Activated CD4-positive, alpha-beta memory T cell treated with anti-CD3 and anti-CD28 coated beads for 36 hours (primary cell): ENCODE measurements at regions of chr7 and their contacts with region 1.

Region 1: GRCh38 chr7:155298834-155299534 is 1.3 kb downstream of the INSIG1 start:
- DNase-seq: peak; percentile 98
- H3K4me3 Mint-ChIP-seq: peak overlapping the region; percentile 93
- H3K27ac Mint-ChIP-seq: peak overlapping the region; percentile 96
- H3K4me1 Mint-ChIP-seq: peaks cover 38% of the 10 kb centered on the region
- H3K27me3 Mint-ChIP-seq: no peaks in the 10 kb centered on the region

Region 2: DNA sequence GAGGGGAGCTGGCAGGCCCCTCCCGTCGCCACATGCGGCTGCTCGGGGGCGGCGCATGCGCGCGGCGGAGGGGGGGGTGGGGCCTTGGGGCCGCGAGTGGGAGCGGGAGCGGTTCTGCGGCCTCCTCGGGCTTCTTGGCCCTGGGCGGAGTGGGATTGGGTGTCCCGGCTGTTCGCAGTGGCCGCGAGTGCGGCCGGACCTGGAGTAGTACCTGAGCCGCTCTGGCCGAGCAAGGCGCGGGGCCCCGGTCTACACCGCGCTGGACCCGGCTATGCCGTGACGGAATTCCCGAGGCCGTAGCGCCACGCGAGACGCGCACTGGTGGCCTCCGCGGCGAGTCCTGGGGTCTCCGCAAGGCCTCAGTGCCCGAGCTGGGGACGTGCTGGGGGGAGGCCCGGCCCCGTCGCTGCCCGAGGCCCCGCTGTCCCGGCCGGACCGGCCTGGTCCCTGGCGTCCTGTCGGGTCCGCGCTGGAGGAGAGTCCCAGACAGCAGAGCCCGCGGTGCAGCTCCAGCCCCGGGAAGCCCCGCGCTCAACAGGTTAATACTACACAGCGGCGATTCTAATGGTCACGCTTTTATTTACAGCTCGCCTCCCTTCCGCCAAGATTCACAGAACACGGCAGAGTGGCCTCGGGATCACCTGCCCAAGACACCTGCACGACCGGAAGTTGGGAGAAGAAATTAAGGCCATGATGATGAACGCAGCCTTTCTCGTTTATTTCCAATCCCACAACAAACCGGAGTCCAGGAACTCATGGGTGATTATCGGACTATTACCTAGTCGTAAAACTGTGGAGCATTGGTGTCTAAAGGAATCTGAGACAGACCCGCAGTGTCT is 295.4 kb before region 1 on chr7:
- CTCF ChIA-PET with region 1: no interaction called
- POLR2A ChIA-PET with region 1: interaction called, 7 read pairs
- intact Hi-C with region 1: loop called (anchors 1 kb)
- DNase-seq: peak; percentile 89
- H3K4me3 Mint-ChIP-seq: peak overlapping the region; percentile 89
- H3K27ac Mint-ChIP-seq: peak overlapping the region; percentile 91
- H3K4me1 Mint-ChIP-seq: peaks cover 12% of the 10 kb centered on the region
- H3K27me3 Mint-ChIP-seq: no peaks in the 10 kb centered on the region

Region 3: GRCh38 chr7:155205368-155206317 is 93.3 kb before region 1 on chr7:
- CTCF ChIA-PET with region 1: interaction called, 28 read pairs
- POLR2A ChIA-PET with region 1: interaction called, 111 read pairs
- intact Hi-C with region 1: loop called (anchors 1 kb)
- DNase-seq: peak; percentile 96
- H3K4me3 Mint-ChIP-seq: peak overlapping the region; percentile 75
- H3K27ac Mint-ChIP-seq: peak overlapping the region; percentile 100
- H3K4me1 Mint-ChIP-seq: peaks cover 45% of the 10 kb centered on the region
- H3K27me3 Mint-ChIP-seq: no peaks in the 10 kb centered on the region

Region 4: GRCh38 chr7:155283565-155284194 is 15.3 kb before region 1 on chr7:
- CTCF ChIA-PET with region 1: interaction called, 4 read pairs
- POLR2A ChIA-PET with region 1: interaction called, 7 read pairs
- intact Hi-C with region 1: loop called (anchors 1 kb)
- DNase-seq: peak; percentile 61
- H3K4me3 Mint-ChIP-seq: no peak overlapping the region
- H3K27ac Mint-ChIP-seq: peak overlapping the region; percentile 58
- H3K4me1 Mint-ChIP-seq: peaks cover 44% of the 10 kb centered on the region
- H3K27me3 Mint-ChIP-seq: peaks cover 24% of the 10 kb centered on the region

Region 5: DNA sequence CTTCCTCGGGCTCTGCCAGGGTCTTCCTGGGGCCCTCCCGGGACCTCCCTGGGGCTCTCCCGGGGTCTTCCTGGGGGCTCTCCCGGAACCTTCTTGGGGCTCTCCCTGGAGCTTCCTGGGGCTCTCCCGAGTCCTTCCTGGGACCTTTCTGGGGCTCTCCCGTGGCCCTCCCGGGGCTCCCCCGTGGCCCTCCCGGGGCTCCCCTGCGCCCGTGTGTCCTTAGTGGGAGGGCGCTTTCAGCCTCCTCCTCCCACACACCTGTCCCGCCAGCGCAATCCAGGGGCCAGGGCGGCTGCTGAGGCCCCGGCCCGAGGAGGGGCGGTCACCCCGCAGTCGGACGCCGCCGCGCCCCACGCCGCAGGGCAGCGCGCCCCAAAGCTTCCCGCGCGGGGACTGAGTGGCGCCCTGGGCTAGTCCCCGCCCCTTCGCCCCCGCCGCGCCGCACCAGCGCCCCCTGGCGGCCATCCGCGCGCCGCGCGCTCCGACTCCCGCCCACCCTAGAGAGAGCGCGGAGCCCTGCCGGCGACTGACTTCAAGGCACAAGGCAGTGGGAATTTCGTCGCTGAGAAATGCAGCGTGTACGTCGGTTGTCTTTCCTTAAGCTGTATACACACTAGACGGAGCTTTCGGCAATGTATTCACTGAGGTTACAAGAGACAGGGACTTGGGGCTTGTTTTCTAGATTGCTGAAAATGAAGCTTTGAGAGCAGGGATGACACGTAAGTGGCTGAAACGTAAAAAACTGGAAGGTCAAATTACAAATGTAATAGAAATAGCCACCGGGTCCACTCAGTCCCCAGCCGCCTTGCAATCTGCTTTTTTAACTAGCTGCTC is 45.8 kb after region 1 on chr7:
- CTCF ChIA-PET with region 1: interaction called, 20 read pairs
- POLR2A ChIA-PET with region 1: interaction called, 10 read pairs
- intact Hi-C with region 1: loop called (anchors 1 kb)
- DNase-seq: peak; percentile 85
- H3K4me3 Mint-ChIP-seq: peak overlapping the region; percentile 45
- H3K27ac Mint-ChIP-seq: no peak overlapping the region
- H3K4me1 Mint-ChIP-seq: peaks cover 7% of the 10 kb centered on the region
- H3K27me3 Mint-ChIP-seq: peaks cover 15% of the 10 kb centered on the region

Region 6: DNA sequence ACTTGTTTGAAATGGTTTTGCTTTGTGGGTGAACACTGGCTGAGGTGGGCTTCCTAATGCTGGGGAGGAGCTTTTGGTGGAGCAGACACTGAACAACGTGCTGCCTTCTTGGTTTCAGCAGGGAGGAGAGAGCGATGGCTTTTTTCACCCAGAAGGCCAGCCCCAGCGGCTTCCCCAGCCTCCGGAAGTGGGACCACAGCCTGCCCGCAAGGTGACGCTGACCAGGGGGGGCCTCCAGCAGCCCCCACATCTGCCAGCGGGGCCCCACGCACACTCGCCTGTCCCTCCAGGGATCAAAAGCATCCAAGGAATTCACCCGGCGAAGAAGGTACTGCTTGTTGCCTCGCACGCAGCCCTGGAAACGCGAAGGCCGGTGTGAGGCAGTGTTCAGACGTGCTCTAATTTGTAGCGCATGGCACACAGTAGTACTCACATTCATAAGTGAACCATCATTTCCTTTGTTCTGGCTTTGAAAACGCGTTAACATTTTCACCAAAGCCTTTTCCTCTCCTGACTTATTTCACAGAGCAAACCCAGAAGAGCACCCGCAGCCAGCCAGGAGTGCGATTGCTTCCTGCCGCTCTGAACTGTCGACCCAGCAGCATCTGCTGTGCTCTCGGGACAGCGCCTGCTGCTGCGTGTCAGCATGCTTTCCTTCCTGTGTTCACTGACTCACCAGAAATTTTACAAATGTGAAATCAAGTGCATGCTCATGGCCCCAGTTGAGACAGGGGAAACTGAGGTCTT is 464.9 kb after region 1 on chr7:
- CTCF ChIA-PET with region 1: no interaction called
- POLR2A ChIA-PET with region 1: no interaction called
- intact Hi-C with region 1: loop called (anchors 10 kb)
- DNase-seq: peak; percentile 80
- H3K4me3 Mint-ChIP-seq: peak overlapping the region; percentile 76
- H3K27ac Mint-ChIP-seq: peak overlapping the region; percentile 99
- H3K4me1 Mint-ChIP-seq: peaks cover 52% of the 10 kb centered on the region
- H3K27me3 Mint-ChIP-seq: no peaks in the 10 kb centered on the region